ENCODE measurements at regions of chr2 and their contacts with region 1.

Region 1: GRCh38 chr2:27271631-27272340 is 3.4 kb upstream of the DNAJC5G start:
- DNase-seq: no peak
- ATAC-seq: no peak
- H3K4me3 ChIP-seq: no peak overlapping the region
- H3K27ac ChIP-seq: no peak overlapping the region
- H3K4me1 ChIP-seq: no peaks in the 10 kb centered on the region
- H3K27me3 ChIP-seq: peaks cover 0 to 4% of the 10 kb centered on the region in 2 donors
- CTCF ChIP-seq: no peak
- POLR2A ChIP-seq: no peak

Region 2: GRCh38 chr2:26959331-26959730 is 312.5 kb before region 1 on chr2:
- intact Hi-C with region 1: loop called (anchors 10 kb)
- DNase-seq: no peak
- ATAC-seq: no peak
- H3K4me3 ChIP-seq: no peak overlapping the region
- H3K27ac ChIP-seq: no peak overlapping the region
- H3K4me1 ChIP-seq: no peaks in the 10 kb centered on the region
- H3K27me3 ChIP-seq: no peaks in the 10 kb centered on the region
- CTCF ChIP-seq: no peak
- POLR2A ChIP-seq: no peak

Region 3: GRCh38 chr2:27914041-27914804 is 642.4 kb after region 1 on chr2:
- intact Hi-C with region 1: no loop called
- DNase-seq: no peak
- ATAC-seq: no peak
- H3K4me3 ChIP-seq: no peak overlapping the region
- H3K27ac ChIP-seq: no peak overlapping the region
- H3K4me1 ChIP-seq: peaks cover 12% of the 10 kb centered on the region
- H3K27me3 ChIP-seq: no peaks in the 10 kb centered on the region
- CTCF ChIP-seq: no peak
- POLR2A ChIP-seq: no peak

Measured in body of pancreas (tissue), 4 donors.